Mammary epithelial cell (primary cell): ENCODE measurements at regions of chrX and their contacts with region 1.

Region 1: DNA sequence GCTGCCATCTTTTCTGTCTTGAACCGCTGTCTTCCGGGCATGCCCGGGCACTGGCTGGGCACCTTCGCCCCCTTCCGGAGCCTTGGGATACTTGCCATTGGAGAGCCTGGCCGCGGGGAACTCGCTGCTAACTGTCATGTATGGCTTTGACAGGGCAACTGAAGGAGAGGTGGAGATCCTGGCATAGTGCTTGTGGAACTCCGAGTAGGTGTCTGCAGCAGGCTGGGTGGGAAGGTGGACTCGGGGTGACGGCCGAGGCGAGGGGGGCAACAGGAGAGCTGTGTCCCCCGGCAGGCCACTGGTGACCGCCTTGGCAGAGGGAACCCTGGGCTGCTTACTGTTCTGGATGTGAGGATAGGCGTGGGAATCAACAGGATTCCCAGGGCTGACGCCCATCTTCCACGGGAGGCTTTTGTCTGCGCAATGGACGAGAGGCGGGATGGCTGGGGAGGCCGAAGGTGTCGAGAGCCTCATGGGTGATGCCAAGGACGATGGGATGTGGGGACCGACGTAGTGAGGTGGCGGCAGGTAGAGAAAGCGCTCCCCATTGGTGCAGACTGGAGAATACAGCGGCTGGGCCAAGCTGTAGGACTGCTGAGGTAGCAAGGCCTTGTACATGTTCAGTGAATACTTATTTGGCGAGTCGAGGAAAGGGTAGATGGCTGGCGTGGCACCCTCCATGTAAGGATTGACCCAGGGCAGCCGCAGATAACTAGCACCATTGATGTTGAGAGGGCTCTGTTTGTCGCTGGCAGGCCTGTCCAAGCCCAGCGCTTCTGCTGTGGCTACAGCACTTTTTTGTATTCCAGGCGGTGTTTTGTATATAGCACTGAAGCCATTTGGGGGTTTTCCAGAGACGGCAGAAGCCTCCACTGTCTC is 23.4 kb downstream of the BCOR start:
- DNase-seq: no peak
- H3K4me3 ChIP-seq: no peak overlapping the region
- H3K27ac ChIP-seq: no peak overlapping the region
- H3K4me1 ChIP-seq: no peaks in the 10 kb centered on the region
- H3K27me3 ChIP-seq: no peaks in the 10 kb centered on the region
- CTCF ChIP-seq: no peak

Region 2: GRCh38 chrX:40132751-40133150 is 58.4 kb after region 1 on chrX:
- CTCF ChIA-PET with region 1: no interaction called
- dilution Hi-C with region 1: loop called (anchors 5 kb)
- in situ Hi-C with region 1: no loop called
- intact Hi-C with region 1: no loop called
- DNase-seq: peak; percentile 76
- H3K4me3 ChIP-seq: no peak overlapping the region
- H3K27ac ChIP-seq: peak overlapping the region; percentile 25
- H3K4me1 ChIP-seq: peaks cover 6% of the 10 kb centered on the region
- H3K27me3 ChIP-seq: no peaks in the 10 kb centered on the region
- CTCF ChIP-seq: no peak

Region 3: DNA sequence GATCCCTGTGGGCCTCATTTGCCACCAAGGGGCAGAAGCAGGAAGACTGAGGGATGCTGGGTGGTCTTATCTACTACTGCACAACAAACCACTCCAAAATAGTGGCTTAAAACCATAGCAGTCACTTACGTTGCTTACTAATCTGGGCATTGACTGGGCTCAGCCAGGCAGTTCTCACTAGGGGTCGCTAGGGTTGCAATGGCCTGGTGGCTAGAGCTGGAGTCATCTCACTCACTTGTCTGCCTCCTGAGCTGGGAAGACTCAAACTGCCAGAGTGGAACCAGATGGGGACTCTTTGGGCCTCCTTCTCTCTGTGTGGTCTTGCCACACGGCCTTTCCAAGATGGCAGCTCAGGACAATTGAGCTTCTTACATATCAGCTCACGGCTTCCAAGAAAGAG is 239.8 kb after region 1 on chrX:
- CTCF ChIA-PET with region 1: no interaction called
- dilution Hi-C with region 1: no loop called
- in situ Hi-C with region 1: no loop called
- intact Hi-C with region 1: no loop called
- DNase-seq: no peak
- H3K4me3 ChIP-seq: no peak overlapping the region
- H3K27ac ChIP-seq: no peak overlapping the region
- H3K4me1 ChIP-seq: no peaks in the 10 kb centered on the region
- H3K27me3 ChIP-seq: peaks cover 2% of the 10 kb centered on the region
- CTCF ChIP-seq: peak in 1 of 2 donors; percentile 16